PC-9 (cell line): ENCODE measurements at regions of chr9 and their contacts with region 1.

Region 1: GRCh38 chr9:122695696-122696095 is 20.8 kb downstream of the OR1L3 start:
- DNase-seq: no peak
- H3K4me3 ChIP-seq: no peak overlapping the region
- H3K27ac ChIP-seq: no peak overlapping the region
- H3K4me1 ChIP-seq: no peaks in the 10 kb centered on the region
- H3K27me3 ChIP-seq: peaks cover 8% of the 10 kb centered on the region; the same call in 1 of the 2 replicates
- CTCF ChIP-seq: no peak

Region 2: GRCh38 chr9:121984726-121985402 is 710.8 kb before region 1 on chr9:
- CTCF ChIA-PET with region 1: no interaction called
- POLR2A ChIA-PET with region 1: no interaction called
- intact Hi-C with region 1: no loop called
- DNase-seq: no peak
- H3K4me3 ChIP-seq: no peak overlapping the region
- H3K27ac ChIP-seq: no peak overlapping the region
- H3K4me1 ChIP-seq: no peaks in the 10 kb centered on the region
- H3K27me3 ChIP-seq: no peaks in the 10 kb centered on the region
- CTCF ChIP-seq: no peak

Region 3: DNA sequence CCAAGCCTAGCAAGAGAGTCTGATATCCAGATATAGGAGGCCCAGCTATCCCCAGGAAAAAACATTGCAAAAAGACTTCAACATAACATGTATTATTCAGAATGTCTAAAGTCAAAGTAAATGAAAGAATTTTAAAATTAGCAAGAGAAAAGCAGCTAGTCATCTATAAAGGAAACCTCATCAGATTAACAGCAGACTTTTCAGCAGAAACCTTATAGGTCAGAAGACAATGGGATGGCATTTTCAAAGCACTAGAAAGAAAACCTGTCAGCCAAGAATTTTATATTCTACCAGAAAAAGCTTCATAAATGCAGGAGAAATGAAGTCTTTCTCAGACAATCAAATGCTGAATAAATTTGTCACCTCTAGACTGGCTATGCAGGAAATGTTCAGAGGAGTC is 10.8 kb before region 1 on chr9:
- CTCF ChIA-PET with region 1: interaction called, 20 read pairs
- POLR2A ChIA-PET with region 1: no interaction called
- intact Hi-C with region 1: no loop called
- DNase-seq: no peak
- H3K4me3 ChIP-seq: no peak overlapping the region
- H3K27ac ChIP-seq: no peak overlapping the region
- H3K4me1 ChIP-seq: no peaks in the 10 kb centered on the region
- H3K27me3 ChIP-seq: no peaks in the 10 kb centered on the region
- CTCF ChIP-seq: no peak

Region 4: GRCh38 chr9:122848256-122848943 is 152.7 kb after region 1 on chr9:
- CTCF ChIA-PET with region 1: no interaction called
- POLR2A ChIA-PET with region 1: no interaction called
- intact Hi-C with region 1: no loop called
- DNase-seq: no peak
- H3K4me3 ChIP-seq: no peak overlapping the region
- H3K27ac ChIP-seq: no peak overlapping the region
- H3K4me1 ChIP-seq: no peaks in the 10 kb centered on the region
- H3K27me3 ChIP-seq: no peaks in the 10 kb centered on the region
- CTCF ChIP-seq: no peak